ENCODE measurements at regions of chr20 and their contacts with region 1.

Region 1: GRCh38 chr20:24469116-24469893 is at the start of gene SYNDIG1:
- DNase-seq: peak in 4 of 5 donors; percentile 38 to 67 (median 53)
- ATAC-seq: peak in 3 of 4 donors; percentile 33 to 75 (median 69)
- H3K4me3 ChIP-seq: peak within 1 kb of the TSS; percentile 37 to 67 (median 58)
- H3K27ac ChIP-seq: peak within 1 kb of the TSS; percentile 49 to 90 (median 79)
- H3K4me1 ChIP-seq: peaks cover 0 to 49% (median 4%) of the 10 kb centered on the region in 12 donors
- H3K27me3 ChIP-seq: peaks cover 0 to 48% (median 7%) of the 10 kb centered on the region in 9 donors
- CTCF ChIP-seq: no peak
- POLR2A ChIP-seq: peak in 1 of 2 donors; percentile 22
- total RNA-seq, gene SYNDIG1: 14.1 to 41.8 (median 24.2) TPM

Region 2: DNA sequence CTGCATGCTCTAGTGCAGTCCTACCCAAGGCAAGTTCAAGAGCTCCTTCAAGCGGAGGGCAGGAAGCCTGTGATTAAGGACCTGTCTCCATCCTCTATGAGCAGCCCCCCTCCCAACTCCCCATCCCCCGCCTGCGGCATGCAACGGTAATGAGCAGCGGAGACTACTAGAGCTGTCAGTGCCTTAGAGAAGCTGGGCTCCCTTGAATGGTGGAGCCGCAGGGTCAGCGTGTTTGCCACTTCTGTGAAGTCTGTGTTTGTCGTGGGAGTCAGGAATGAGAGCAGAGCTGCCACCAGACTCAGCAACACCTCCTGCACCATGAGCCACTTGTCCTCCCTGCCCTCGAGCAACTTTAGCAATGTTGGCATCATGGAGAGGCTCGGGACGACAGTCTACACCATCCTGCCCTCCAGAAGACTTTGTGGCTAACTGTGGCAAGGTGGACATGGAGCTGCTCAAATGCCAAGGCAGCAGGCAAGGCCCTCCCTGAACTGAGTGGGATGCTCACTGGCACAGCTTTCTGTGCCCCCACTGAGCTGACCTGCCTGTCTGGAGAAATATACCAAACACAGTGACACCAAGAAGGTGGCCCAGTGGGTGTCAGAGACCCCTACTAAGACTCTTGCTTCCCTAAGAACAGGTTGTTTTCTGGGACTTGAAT is 23.7 kb before region 1 on chr20:
- intact Hi-C with region 1: no loop called
- DNase-seq: no peak
- ATAC-seq: no peak
- H3K4me3 ChIP-seq: no peak overlapping the region
- H3K27ac ChIP-seq: no peak overlapping the region
- H3K4me1 ChIP-seq: no peaks in the 10 kb centered on the region
- H3K27me3 ChIP-seq: peaks cover 0 to 4% (median 0%) of the 10 kb centered on the region in 9 donors
- CTCF ChIP-seq: no peak
- POLR2A ChIP-seq: no peak

Region 3: GRCh38 chr20:24501764-24502556 is 32.7 kb after region 1 on chr20:
- intact Hi-C with region 1: loop called in 3 of 10 experiments (anchors 5 kb)
- DNase-seq: peak in 1 of 5 donors; percentile 76
- ATAC-seq: peak in 2 of 4 donors; percentile 10 to 34
- H3K4me3 ChIP-seq: no peak overlapping the region
- H3K27ac ChIP-seq: peak overlapping the region; percentile 64 to 98 (median 88)
- H3K4me1 ChIP-seq: peaks cover 0 to 54% (median 15%) of the 10 kb centered on the region in 12 donors
- H3K27me3 ChIP-seq: no peaks in the 10 kb centered on the region
- CTCF ChIP-seq: no peak
- POLR2A ChIP-seq: no peak

Region 4: GRCh38 chr20:24619212-24619611 is 149.9 kb after region 1 on chr20:
- intact Hi-C with region 1: loop called in 1 of 10 experiments (anchors 10 kb)
- DNase-seq: no peak
- ATAC-seq: peak; percentile 12 to 71 (median 48)
- H3K4me3 ChIP-seq: no peak overlapping the region
- H3K27ac ChIP-seq: no peak overlapping the region
- H3K4me1 ChIP-seq: peaks cover 0 to 10% (median 0%) of the 10 kb centered on the region in 12 donors
- H3K27me3 ChIP-seq: no peaks in the 10 kb centered on the region
- CTCF ChIP-seq: no peak
- POLR2A ChIP-seq: no peak

Measured in heart left ventricle (tissue), 16 donors.